ENCODE measurements at regions of chr9 and their contacts with region 1.

Region 1: GRCh38 chr9:121267689-121268597 is at the start of gene GSN:
- DNase-seq: peak; percentile 60
- ATAC-seq: peak; percentile 91
- H3K4me3 Mint-ChIP-seq: peak within 1 kb of the TSS; percentile 84
- H3K27ac Mint-ChIP-seq: peak within 1 kb of the TSS; percentile 46
- H3K4me1 Mint-ChIP-seq: peaks cover 39% of the 10 kb centered on the region
- H3K27me3 Mint-ChIP-seq: no peaks in the 10 kb centered on the region
- CTCF ChIP-seq: no peak
- total RNA-seq, gene GSN: 21.9 and 26.5 TPM in 2 replicates

Region 2: GRCh38 chr9:121278535-121279261 is 10.8 kb after region 1 on chr9:
- CTCF ChIA-PET with region 1: interaction called, 14 read pairs
- POLR2A ChIA-PET with region 1: no interaction called
- intact Hi-C with region 1: loop called (anchors 1 kb)
- DNase-seq: no peak
- ATAC-seq: peak; percentile 84
- H3K4me3 Mint-ChIP-seq: no peak overlapping the region
- H3K27ac Mint-ChIP-seq: no peak overlapping the region
- H3K4me1 Mint-ChIP-seq: peaks cover 23% of the 10 kb centered on the region
- H3K27me3 Mint-ChIP-seq: no peaks in the 10 kb centered on the region
- CTCF ChIP-seq: peak; percentile 22

Region 3: GRCh38 chr9:121369595-121370265 is 101.8 kb after region 1 on chr9 and contains the start of gene STOM:
- CTCF ChIA-PET with region 1: no interaction called
- POLR2A ChIA-PET with region 1: no interaction called
- intact Hi-C with region 1: loop called (anchors 5 kb)
- DNase-seq: no peak
- ATAC-seq: peak; percentile 56
- H3K4me3 Mint-ChIP-seq: peak within 1 kb of the TSS; percentile 93
- H3K27ac Mint-ChIP-seq: peak within 1 kb of the TSS; percentile 96
- H3K4me1 Mint-ChIP-seq: peaks cover 28% of the 10 kb centered on the region
- H3K27me3 Mint-ChIP-seq: no peaks in the 10 kb centered on the region
- CTCF ChIP-seq: no peak
- total RNA-seq, gene STOM: 9.8 and 11.3 TPM in 2 replicates

Measured in activated B cell treated with CpG ODN at 0.5 μM for 24 hours (primary cell).